ENCODE measurements at regions of chr11 and their contacts with region 1.

Region 1: GRCh38 chr11:66787912-66788758 is 55.1 kb upstream of the RCE1 start:
- DNase-seq: no peak
- ATAC-seq: peak in 1 of 4 donors; percentile 54
- H3K4me3 ChIP-seq: no peak overlapping the region
- H3K27ac ChIP-seq: peak overlapping the region in 1 of 12 donors; percentile 20
- H3K4me1 ChIP-seq: peaks cover 0 to 16% (median 0%) of the 10 kb centered on the region in 12 donors
- H3K27me3 ChIP-seq: no peaks in the 10 kb centered on the region
- CTCF ChIP-seq: no peak
- POLR2A ChIP-seq: no peak

Region 2: DNA sequence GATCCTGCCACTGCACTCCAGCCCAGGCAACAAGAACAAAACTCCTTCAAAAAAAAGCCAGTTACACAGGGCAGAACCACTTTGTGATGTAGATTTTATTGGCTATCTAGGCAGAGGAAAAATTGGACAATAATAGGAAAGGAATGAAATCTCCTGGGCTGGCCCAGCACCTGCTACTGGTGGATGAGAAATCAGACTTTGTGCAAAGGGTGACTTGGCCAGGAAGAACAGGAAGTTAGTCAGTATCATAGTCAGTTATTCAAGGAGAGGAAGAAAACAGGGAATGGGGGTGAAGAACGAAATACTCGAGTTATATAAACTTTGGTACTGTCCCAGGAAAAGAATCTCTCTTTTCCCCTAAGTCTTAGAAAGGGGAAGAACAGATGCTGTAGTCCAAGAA is 48.2 kb before region 1 on chr11:
- intact Hi-C with region 1: loop called in 1 of 10 experiments (anchors 5 kb)
- DNase-seq: no peak
- ATAC-seq: no peak
- H3K4me3 ChIP-seq: no peak overlapping the region
- H3K27ac ChIP-seq: no peak overlapping the region
- H3K4me1 ChIP-seq: peaks cover 0 to 14% (median 6%) of the 10 kb centered on the region in 12 donors
- H3K27me3 ChIP-seq: no peaks in the 10 kb centered on the region
- CTCF ChIP-seq: no peak
- POLR2A ChIP-seq: no peak

Measured in heart left ventricle (tissue), 16 donors.